Calu3 (cell line): ENCODE measurements at regions of chr9 and their contacts with region 1.

Region 1: DNA sequence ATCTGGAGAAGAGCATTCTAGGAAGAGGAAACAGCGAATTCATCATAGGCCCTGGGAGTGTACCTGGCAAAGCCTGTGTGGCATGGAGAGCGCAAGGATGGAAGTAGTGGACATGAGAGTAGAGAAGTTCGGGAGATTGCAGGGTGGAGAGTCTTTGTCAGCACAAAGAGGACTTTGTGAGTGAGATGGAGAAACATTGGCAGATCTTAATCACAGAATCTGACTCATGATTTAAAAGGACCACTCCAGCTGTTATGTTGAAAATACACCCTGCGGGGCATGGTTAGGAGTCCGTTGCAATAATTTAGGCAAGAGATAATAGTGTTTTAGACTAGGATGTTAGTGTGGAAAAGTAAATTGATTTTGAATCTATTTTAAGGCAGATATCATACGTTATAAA is 116.9 kb downstream of the HACD4 start:
- DNase-seq: no peak
- H3K4me3 Mint-ChIP-seq: no peak overlapping the region
- H3K27ac Mint-ChIP-seq: no peak overlapping the region
- H3K4me1 Mint-ChIP-seq: no peaks in the 10 kb centered on the region
- H3K27me3 Mint-ChIP-seq: no peaks in the 10 kb centered on the region
- CTCF ChIP-seq: no peak

Region 2: DNA sequence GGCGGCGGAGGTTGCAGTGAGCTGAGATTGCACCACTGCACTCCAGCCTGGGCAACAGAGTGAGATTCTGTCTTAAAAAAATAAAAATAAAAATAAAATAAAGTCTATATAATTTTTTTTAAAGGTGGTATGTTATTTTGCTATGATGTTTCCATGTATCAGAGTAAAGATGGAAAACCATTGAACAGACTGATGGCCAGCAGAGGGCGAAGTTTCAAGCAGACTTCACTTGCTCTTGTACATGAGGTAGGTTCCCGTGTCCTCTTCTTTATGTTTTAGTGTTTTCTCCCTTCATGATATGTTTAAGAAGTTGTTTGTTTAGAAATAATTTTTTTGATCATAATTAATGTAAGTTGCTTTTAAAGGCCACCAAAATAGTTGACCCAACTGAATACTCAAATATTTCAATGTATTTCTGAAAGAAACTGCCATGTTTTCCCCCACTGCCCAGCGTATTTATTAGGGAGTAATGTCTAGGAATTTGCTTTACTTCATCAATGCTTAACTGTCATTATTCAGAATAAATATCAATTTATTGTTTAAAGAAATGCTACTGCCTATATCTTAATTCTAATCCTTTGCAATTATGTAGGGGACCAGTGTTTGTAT is 29.5 kb before region 1 on chr9:
- CTCF ChIA-PET with region 1: no interaction called
- intact Hi-C with region 1: no loop called
- DNase-seq: peak; percentile 54
- H3K4me3 Mint-ChIP-seq: no peak overlapping the region
- H3K27ac Mint-ChIP-seq: no peak overlapping the region
- H3K4me1 Mint-ChIP-seq: no peaks in the 10 kb centered on the region
- H3K27me3 Mint-ChIP-seq: no peaks in the 10 kb centered on the region
- CTCF ChIP-seq: peak; percentile 40

Region 3: DNA sequence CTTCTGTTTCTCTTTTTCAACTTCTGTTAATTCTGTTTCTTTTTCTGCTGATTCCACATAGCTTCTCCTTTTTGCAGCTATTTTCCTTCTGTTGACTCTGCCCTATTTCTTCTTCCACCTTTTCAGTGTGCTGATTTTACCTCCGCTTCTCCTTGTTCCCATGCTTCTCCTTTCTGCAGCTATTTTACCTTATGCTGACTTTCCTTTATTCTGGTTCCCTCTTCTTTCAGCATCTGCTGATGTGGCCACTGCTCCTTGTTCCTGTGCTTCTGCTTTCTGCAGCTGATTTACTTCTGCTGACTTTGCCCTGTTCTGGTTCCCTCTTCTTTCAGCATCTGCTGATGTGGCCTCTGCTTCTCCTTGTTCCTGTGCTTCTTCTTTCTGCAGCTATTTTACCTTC is 58.1 kb after region 1 on chr9:
- CTCF ChIA-PET with region 1: no interaction called
- intact Hi-C with region 1: loop called (anchors 10 kb)
- DNase-seq: no peak
- H3K4me3 Mint-ChIP-seq: no peak overlapping the region
- H3K27ac Mint-ChIP-seq: no peak overlapping the region
- H3K4me1 Mint-ChIP-seq: no peaks in the 10 kb centered on the region
- H3K27me3 Mint-ChIP-seq: no peaks in the 10 kb centered on the region
- CTCF ChIP-seq: no peak